GM13976 (cell line): ENCODE measurements at regions of chr1 and their contacts with region 1.

Region 1: GRCh38 chr1:156892190-156893047 is 1.1 kb upstream of the PEAR1 start:
- DNase-seq: peak; percentile 90
- CTCF ChIP-seq: peak; percentile 84

Region 2: GRCh38 chr1:156551866-156552265 is 340.6 kb before region 1 on chr1:
- in situ Hi-C with region 1: no loop called
- DNase-seq: no peak
- CTCF ChIP-seq: no peak

Region 3: DNA sequence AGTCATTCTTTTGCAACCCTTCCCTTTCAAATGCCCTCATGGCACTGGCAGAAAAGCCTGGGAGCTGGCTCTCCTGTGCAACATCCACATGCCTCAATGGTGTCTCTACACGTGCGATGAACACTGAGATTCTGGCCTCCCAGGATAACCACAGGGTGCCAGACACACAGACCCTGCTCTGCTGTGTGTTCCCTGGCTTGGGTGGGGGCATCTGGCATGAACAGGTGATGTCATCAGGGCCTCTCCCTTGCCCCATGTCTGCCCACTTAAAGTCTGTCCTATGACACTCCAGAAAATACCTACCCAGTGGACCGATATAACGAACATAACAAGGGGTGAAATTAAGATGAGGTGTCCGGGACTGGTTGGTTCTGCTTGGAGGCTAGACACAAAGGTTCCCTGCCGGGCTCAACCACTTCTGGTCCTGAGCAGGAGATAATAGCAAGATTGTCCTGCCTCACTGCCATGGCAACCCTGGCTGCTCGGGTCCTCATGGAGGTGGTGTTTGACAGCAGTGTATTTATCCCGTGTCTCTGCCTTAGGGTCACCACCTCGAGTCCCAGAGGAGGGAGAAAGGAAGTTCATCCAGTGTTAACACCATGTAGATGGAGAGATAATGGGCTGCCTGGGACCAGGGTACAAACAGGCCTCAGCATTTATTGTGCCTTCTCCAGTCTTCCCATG is 52.9 kb before region 1 on chr1:
- in situ Hi-C with region 1: loop called (anchors 5 kb)
- DNase-seq: no peak
- CTCF ChIP-seq: no peak